ENCODE measurements at regions of chr7 and their contacts with region 1.

Region 1: DNA sequence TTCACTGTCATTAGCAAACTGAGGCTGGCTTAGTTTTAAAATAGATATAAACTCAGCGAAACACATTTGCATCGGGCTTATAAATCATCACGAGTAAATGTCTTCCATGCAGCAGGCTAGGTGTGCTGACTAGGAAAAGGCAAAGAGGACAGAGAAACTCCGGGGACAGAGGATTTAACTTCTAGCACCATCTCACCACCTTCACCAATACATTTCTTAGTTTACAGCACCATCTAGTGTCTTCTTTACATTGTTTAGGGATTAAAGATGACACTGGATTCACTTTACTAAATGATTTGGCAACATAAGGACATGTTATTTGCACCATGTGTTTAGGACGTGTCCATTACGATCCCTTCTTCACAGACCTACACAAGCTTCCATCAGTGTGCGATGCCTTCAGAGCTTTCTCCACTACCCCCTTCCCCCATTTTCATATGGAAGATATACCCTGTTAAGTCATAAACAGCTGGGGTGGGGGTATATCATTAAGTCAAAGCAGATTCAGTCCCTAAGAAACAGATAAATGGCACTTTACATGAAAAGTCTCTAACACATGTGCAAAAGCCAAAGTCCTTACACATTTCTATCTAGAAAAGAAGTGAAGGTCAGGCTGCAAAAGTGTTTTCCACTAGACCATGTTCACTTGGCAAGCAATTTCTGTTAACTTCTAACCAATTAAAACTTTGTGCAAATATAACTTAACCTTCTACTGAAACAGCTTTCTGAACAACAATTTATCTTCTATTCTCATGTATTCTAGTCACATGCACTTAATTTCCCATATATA is 103.3 kb downstream of the GRB10 start:
- DNase-seq: peak in 2 of 5 donors; percentile 50 to 54
- H3K4me3 ChIP-seq: no peak overlapping the region
- H3K4me3 Mint-ChIP-seq: no peak overlapping the region
- H3K27ac ChIP-seq: no peak overlapping the region
- H3K27ac Mint-ChIP-seq: no peak overlapping the region
- H3K4me1 ChIP-seq: no peaks in the 10 kb centered on the region
- H3K4me1 Mint-ChIP-seq: peaks cover 0 to 3% (median 3%) of the 10 kb centered on the region in 3 donors
- H3K27me3 ChIP-seq: no peaks in the 10 kb centered on the region
- H3K27me3 Mint-ChIP-seq: peaks cover 6 to 27% of the 10 kb centered on the region in 2 donors

Region 2: DNA sequence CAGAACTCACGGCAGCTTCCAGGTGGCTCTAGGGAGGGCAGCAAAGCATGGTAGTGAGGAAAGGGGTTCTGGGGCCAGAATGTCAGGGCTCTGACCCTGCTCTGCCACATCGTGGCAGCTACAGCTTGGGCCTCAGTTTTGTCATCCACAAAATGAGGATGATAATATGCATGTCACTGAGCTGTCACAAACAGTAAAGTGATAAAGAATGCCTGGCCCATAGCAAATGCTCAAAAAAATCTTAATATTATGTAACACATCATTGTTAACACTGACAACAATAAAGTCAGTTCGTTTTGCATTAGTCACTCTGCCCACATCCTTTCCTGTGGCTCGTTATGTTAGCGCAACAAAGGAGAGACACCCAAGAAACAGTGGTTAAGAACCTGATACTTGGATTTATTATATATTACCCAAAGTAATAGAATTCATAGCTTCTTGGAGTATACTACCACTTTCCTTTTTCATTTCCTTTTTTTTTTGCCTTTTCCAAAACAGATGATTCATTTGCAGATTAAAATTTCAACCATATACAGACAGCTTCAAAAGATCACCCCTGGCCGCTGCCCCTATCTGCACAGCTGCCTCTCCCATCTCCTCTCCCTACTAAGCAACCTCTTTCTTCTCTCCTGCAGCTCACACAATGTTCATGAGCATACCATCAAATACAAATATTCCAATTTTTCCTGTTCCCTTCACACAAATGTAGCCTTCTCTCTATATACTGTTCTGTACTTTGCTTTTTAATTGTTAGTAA is 68.7 kb before region 1 on chr7:
- CTCF ChIA-PET with region 1: interaction called, 29 read pairs
- POLR2A ChIA-PET with region 1: no interaction called
- DNase-seq: peak; percentile 22 to 77 (median 40)
- H3K4me3 ChIP-seq: peak overlapping the region; percentile 20
- H3K4me3 Mint-ChIP-seq: peak overlapping the region; percentile 6 to 79 (median 53)
- H3K27ac ChIP-seq: peak overlapping the region; percentile 29
- H3K27ac Mint-ChIP-seq: peak overlapping the region; percentile 6 to 79 (median 66)
- H3K4me1 ChIP-seq: peaks cover 30% of the 10 kb centered on the region
- H3K4me1 Mint-ChIP-seq: peaks cover 45 to 66% (median 56%) of the 10 kb centered on the region in 3 donors
- H3K27me3 ChIP-seq: no peaks in the 10 kb centered on the region
- H3K27me3 Mint-ChIP-seq: no peaks in the 10 kb centered on the region

Region 3: GRCh38 chr7:50696810-50697582 is 17.6 kb after region 1 on chr7:
- CTCF ChIA-PET with region 1: no interaction called
- POLR2A ChIA-PET with region 1: no interaction called
- DNase-seq: peak in 1 of 5 donors; percentile 24
- H3K4me3 ChIP-seq: no peak overlapping the region
- H3K4me3 Mint-ChIP-seq: no peak overlapping the region
- H3K27ac ChIP-seq: no peak overlapping the region
- H3K27ac Mint-ChIP-seq: no peak overlapping the region
- H3K4me1 ChIP-seq: no peaks in the 10 kb centered on the region
- H3K4me1 Mint-ChIP-seq: peaks cover 0 to 4% (median 2%) of the 10 kb centered on the region in 3 donors
- H3K27me3 ChIP-seq: no peaks in the 10 kb centered on the region
- H3K27me3 Mint-ChIP-seq: peaks cover 4 to 25% of the 10 kb centered on the region in 2 donors